ENCODE measurements at regions of chr3 and their contacts with region 1.

Region 1: DNA sequence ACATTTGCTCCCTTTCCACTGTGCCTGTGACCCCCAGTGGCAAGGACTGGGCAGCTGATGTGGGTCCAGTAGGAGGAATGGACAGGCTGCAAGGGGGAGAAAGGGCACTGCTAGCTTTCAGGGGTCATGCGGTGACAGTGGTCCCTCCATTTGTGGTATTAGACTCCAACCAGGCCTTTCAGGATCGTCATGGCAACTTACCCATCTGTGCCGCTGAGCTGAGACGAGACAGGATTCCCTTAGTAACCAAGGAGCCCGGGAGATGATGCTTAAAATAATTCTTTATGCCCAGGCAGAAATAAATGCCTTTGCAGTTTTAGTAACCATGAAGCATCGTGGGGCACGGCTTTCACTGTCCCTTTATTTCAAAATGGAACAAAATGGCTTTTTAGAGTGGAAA is 15.9 kb upstream of the MRPL3 start:
- DNase-seq: no peak
- H3K4me3 ChIP-seq: no peak overlapping the region
- H3K27ac ChIP-seq: no peak overlapping the region
- H3K4me1 ChIP-seq: no peaks in the 10 kb centered on the region
- H3K27me3 ChIP-seq: no peaks in the 10 kb centered on the region
- CTCF ChIP-seq: no peak
- POLR2A ChIP-seq: no peak

Region 2: DNA sequence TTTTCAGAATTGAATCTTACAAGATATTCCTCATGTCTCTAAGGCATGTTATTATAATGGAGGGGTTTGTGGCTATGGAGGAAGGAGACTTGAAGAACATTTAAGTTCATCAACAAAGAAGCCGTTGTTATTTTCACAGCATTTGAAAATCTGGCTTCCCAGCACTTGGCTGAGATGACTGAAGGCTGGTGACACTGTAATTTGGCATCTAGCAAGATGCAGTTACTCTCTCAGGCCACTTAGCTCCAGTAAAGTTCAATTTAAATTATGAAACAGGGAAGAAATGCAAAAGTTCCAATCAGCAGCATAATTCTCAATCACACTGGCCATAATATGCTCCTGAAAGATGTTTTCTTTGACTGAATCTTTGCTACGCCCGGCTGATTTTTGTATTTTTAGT is 276.5 kb before region 1 on chr3:
- CTCF ChIA-PET with region 1: no interaction called
- POLR2A ChIA-PET with region 1: no interaction called
- dilution Hi-C with region 1: no loop called
- intact Hi-C with region 1: loop called (anchors 10 kb)
- DNase-seq: no peak
- H3K4me3 ChIP-seq: no peak overlapping the region
- H3K27ac ChIP-seq: no peak overlapping the region
- H3K4me1 ChIP-seq: no peaks in the 10 kb centered on the region
- H3K27me3 ChIP-seq: no peaks in the 10 kb centered on the region
- CTCF ChIP-seq: no peak
- POLR2A ChIP-seq: no peak

Region 3: DNA sequence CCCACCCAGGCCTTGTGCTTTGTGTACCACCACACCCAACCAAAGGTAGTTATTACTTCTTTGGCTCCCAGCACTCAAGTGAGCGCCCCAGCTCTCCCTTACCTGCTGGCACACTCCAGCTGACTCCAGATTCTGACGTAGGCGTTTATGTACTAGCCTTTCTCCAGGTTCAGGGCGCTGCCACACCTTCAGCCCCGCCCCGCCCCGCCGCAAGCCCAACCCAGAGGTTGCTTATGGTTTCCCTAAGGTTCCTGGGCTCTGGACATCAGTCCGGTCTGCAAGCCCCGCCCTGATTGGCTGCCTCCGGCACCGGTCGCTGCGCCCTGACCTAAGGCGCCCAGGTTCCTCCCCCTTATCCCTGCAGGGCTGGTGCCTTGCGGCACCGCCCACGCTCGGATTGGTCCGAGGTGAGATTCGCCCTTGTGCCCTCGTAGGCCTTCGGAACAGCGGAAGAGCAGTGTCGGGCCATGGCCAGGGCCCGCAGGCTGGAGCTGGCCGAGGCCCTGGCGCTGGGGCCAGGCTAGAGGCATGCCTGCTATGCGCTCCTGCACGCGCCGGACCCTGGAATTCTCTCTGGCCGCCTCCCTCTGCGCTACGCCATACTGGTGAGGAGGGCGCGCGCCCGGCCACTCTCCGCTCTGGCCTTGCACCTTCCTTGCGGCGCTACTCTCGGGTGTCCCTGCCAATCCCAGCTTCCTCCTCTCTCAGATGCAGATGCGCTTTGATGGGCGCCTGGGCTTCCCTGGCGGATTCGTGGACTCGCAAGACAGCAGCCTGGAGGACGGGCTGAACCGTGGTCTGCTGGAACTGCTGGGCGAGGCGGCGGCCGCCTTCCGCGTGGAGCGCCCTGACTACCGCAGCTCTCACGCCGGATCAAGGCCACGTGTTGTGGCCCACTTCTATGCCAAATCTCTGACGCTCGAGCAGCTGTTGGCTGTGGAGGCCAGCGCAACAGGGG is 156.9 kb before region 1 on chr3:
- CTCF ChIA-PET with region 1: no interaction called
- POLR2A ChIA-PET with region 1: no interaction called
- dilution Hi-C with region 1: no loop called
- intact Hi-C with region 1: no loop called
- DNase-seq: peak; percentile 16
- H3K4me3 ChIP-seq: peak overlapping the region in 1 of 3 experiments; percentile 28
- H3K27ac ChIP-seq: no peak overlapping the region
- H3K4me1 ChIP-seq: no peaks in the 10 kb centered on the region
- H3K27me3 ChIP-seq: no peaks in the 10 kb centered on the region
- CTCF ChIP-seq: no peak
- POLR2A ChIP-seq: no peak

Measured in endothelial cell of umbilical vein (primary cell).